Transverse colon (tissue), 4 donors: ENCODE measurements at regions of chr3 and their contacts with region 1.

Region 1: DNA sequence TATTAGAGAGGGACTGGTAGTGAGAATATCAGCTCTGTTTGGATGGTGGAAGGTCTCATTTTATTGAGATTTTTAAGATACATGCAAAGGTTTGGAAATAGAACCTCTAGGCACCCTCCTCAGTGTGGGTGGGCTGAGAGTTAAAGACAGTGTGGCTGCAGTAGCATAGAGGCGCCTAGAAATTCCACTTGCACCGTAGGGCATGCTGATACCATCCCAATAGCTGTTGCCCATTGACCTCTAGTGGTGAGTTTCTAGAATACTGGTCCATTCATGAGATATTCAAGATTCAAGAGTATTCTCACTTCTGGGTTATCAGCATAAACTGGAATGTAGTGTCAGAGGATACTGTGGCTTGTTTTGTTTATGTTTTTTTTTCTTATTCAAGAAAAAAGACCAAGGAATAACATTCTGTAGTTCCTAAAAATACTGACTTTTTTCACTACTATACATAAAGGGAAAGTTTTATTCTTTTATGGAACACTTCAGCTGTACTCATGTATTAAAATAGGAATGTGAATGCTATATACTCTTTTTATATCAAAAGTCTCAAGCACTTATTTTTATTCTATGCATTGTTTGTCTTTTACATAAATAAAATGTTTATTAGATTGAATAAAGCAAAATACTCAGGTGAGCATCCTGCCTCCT is 87.2 kb downstream of the TGFBR2 start:
- DNase-seq: peak; percentile 30
- H3K4me3 ChIP-seq: no peak overlapping the region
- H3K27ac ChIP-seq: peak overlapping the region; percentile 40 to 83 (median 61)
- H3K4me1 ChIP-seq: peaks cover 14 to 57% (median 26%) of the 10 kb centered on the region in 4 donors
- H3K27me3 ChIP-seq: no peaks in the 10 kb centered on the region
- CTCF ChIP-seq: peak; percentile 77 to 88 (median 84)
- EP300 ChIP-seq: no peak
- POLR2A ChIP-seq: no peak

Region 2: DNA sequence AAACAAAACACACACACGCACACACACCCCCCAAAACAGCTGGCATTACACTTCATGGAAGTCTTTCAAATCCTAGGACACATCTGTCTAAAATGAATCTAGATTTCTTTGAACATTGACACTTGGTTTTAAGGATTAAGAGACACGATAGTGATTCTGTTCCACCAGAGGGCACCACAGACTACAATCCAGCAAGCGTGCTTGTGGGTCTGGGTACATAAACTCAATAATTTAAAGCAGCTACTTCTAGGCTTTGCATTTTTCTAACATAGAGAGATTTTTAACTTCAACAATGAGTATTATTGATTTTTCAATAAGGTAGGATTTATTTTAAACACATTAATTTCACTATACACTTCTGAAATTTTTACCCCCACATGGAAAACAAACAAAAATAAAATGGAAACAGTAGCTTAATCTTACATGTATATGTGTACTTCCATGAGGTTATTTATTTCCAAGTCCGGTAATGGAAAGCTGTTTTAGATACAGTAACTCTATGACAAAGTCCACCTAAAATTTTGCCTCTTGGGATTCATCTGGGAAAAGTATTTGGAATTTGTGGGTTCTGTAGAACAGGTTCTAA is 651.2 kb before region 1 on chr3:
- in situ Hi-C with region 1: loop called in 1 of 4 experiments (anchors 10 kb)
- intact Hi-C with region 1: loop called (anchors 10 kb)
- DNase-seq: peak; percentile 68
- H3K4me3 ChIP-seq: no peak overlapping the region
- H3K27ac ChIP-seq: no peak overlapping the region
- H3K4me1 ChIP-seq: peaks cover 0 to 4% (median 0%) of the 10 kb centered on the region in 4 donors
- H3K27me3 ChIP-seq: no peaks in the 10 kb centered on the region
- CTCF ChIP-seq: peak; percentile 65 to 83 (median 77)
- EP300 ChIP-seq: no peak
- POLR2A ChIP-seq: no peak

Region 3: GRCh38 chr3:30112902-30113484 is 580.6 kb before region 1 on chr3:
- in situ Hi-C with region 1: loop called in 3 of 4 experiments (anchors 10 kb)
- intact Hi-C with region 1: loop called (anchors 5 kb)
- DNase-seq: no peak
- H3K4me3 ChIP-seq: no peak overlapping the region
- H3K27ac ChIP-seq: no peak overlapping the region
- H3K4me1 ChIP-seq: peaks cover 0 to 22% (median 9%) of the 10 kb centered on the region in 4 donors
- H3K27me3 ChIP-seq: no peaks in the 10 kb centered on the region
- CTCF ChIP-seq: peak; percentile 58 to 76 (median 65)
- EP300 ChIP-seq: no peak
- POLR2A ChIP-seq: no peak

Region 4: DNA sequence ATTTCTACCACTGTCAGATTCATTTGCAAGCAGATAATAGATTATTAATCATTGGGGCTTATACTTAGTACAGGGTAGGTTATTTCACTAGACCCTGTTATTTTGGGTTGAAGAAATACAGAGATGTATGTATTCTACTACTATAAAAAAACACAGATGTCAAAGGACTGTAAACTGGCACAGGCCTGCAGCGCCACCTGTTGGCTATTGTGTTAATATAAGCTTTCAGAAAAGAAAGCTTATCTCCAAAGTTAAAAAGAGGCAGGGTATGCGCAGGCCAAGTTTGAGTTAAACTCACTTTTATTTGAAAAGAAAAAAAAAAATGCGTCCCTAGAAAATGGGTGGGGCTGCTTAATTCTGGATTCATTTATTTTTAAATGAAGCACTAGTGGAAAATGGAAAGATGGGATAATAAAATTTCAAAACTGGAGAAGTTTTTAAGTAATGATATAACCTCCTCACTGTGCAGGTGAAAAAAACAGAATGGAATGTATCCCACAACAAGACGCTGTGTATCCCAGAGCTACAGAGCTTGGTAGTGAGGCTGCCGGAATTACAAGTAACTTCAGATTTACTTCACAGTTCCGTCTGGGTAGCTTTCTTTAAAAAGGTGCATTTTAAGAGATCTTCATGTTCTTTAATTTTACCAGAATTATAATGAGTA is 494.4 kb before region 1 on chr3:
- in situ Hi-C with region 1: loop called in 2 of 4 experiments (anchors 10 kb)
- intact Hi-C with region 1: no loop called
- DNase-seq: peak; percentile 76
- H3K4me3 ChIP-seq: no peak overlapping the region
- H3K27ac ChIP-seq: no peak overlapping the region
- H3K4me1 ChIP-seq: peaks cover 0 to 8% (median 0%) of the 10 kb centered on the region in 4 donors
- H3K27me3 ChIP-seq: no peaks in the 10 kb centered on the region
- CTCF ChIP-seq: peak; percentile 81 to 89 (median 83)
- EP300 ChIP-seq: no peak
- POLR2A ChIP-seq: no peak

Region 5: DNA sequence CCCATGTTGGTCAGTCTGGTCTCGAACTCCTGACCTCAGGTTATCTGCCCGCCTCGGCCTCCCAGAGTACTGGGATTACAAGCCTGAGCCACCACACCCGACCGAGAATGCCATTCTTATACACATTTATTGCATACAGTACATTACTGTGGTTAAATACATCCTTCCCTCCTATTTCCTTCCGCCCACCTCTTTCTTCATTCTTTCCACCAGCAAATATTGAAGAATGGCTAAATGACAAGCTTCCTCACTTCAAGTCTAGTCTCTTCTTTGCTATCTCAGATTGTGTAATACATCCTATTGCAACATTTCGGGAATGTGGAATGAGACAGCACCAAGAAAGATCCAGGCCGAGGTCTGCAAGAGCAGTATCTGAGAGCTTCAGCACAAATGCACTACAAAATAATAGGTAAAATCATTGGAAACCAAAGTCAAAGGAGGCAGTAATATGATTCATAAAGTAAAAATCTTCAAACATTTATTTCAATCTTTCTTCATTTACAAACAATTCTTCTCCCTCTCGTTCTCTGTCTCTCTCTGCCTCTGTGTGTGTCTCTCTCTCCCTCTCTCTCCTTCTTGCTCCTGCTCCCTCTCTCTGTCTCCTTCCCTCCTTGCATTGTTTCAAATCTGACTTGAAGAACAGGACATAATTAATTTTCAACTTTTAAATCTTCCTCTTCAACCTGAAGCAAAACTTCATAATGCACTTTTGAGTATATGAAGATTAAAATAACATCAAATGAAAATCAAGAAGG is 181.9 kb before region 1 on chr3:
- in situ Hi-C with region 1: loop called in 1 of 4 experiments (anchors 25 kb)
- intact Hi-C with region 1: loop called (anchors 10 kb)
- DNase-seq: no peak
- H3K4me3 ChIP-seq: no peak overlapping the region
- H3K27ac ChIP-seq: peak overlapping the region; percentile 30 to 63 (median 44)
- H3K4me1 ChIP-seq: peaks cover 0 to 17% (median 2%) of the 10 kb centered on the region in 4 donors
- H3K27me3 ChIP-seq: no peaks in the 10 kb centered on the region
- CTCF ChIP-seq: no peak
- EP300 ChIP-seq: no peak
- POLR2A ChIP-seq: no peak

Region 6: DNA sequence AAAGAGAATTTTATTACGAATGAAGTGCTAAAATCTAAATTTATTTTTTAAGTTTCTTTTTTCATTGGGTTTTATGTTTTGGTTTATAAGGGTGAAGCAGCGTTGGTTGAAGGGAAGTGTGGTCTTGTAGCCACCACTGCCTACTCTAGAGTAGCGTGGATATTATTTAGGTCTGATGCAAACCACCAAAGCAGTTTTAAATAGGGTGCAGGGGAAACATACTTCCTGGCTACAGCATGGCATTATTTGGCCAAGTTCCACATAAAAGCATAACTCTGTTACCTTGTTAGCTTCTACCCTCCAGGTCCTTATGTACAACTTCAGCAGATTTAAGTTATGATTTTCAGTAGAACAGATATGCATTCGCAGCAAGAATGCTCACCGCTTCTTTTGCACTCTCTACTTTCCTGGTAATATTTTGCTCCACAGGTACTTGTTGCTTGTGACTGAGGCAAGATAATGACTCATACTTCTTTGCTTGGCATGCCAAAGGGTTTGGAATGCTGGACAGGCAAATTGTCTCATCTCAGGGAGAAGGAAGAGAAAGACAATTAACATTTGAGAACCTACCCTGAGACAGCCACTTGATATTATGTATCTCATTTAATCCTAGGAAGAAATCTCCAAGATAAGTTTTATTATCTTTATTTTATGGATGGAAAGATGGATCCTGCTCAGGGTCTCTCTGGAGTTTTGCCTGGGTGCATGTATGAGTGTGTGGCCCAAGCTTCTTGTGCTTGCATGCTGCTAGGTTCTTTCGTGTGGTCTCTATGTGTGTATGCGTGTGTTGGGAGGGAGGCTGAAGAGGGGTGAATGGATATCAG is 81.8 kb before region 1 on chr3:
- in situ Hi-C with region 1: no loop called
- intact Hi-C with region 1: loop called (anchors 10 kb)
- DNase-seq: no peak
- H3K4me3 ChIP-seq: peak overlapping the region in 1 of 4 donors; percentile 6
- H3K27ac ChIP-seq: peak overlapping the region; percentile 96 to 99 (median 99)
- H3K4me1 ChIP-seq: peaks cover 0 to 81% (median 40%) of the 10 kb centered on the region in 4 donors
- H3K27me3 ChIP-seq: no peaks in the 10 kb centered on the region
- CTCF ChIP-seq: no peak
- EP300 ChIP-seq: no peak
- POLR2A ChIP-seq: no peak

Region 7: GRCh38 chr3:30713885-30714503 is 20.4 kb after region 1 on chr3:
- in situ Hi-C with region 1: no loop called
- intact Hi-C with region 1: loop called (anchors 1 kb)
- DNase-seq: no peak
- H3K4me3 ChIP-seq: no peak overlapping the region
- H3K27ac ChIP-seq: no peak overlapping the region
- H3K4me1 ChIP-seq: peaks cover 0 to 23% (median 7%) of the 10 kb centered on the region in 4 donors
- H3K27me3 ChIP-seq: no peaks in the 10 kb centered on the region
- CTCF ChIP-seq: no peak
- EP300 ChIP-seq: no peak
- POLR2A ChIP-seq: no peak